PC-3 (cell line): ENCODE measurements at regions of chr10 and their contacts with region 1.

Region 1: DNA sequence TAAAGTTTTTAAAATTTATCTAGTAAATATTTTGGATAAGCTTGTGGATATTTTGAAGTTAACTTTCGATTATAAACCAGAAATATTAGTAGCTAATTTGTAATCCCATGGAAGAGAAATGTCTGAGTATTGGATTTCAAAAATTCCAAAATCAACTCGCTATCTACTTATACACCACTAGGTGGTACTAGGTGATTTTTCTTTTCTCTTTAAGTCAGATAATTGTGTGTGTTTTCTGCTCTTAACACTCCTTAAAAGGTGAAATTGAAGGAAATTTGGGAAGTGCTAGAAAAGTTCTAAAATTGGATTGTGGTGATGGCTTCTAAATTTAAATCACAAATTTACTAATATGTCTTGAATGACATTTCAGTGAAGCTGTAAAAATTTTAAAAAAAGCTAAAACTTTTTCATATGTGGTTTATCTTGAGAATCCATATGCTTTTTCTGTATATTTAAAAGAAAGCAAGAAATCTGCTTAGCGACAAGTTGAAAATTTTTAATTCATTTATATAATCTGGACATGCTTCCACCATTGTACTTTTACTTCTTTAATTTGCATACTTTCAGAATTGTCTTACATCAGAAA is 90.2 kb downstream of the IPMK start:
- DNase-seq: peak; percentile 64
- ATAC-seq: peak; percentile 31; the same call in 1 of the 2 replicates
- H3K4me3 ChIP-seq: no peak overlapping the region
- H3K27ac ChIP-seq: no peak overlapping the region
- H3K4me1 ChIP-seq: peaks cover 6% of the 10 kb centered on the region
- H3K27me3 ChIP-seq: peaks cover 2% of the 10 kb centered on the region; the same call in 1 of the 2 replicates
- CTCF ChIP-seq: peak; percentile 94

Region 2: DNA sequence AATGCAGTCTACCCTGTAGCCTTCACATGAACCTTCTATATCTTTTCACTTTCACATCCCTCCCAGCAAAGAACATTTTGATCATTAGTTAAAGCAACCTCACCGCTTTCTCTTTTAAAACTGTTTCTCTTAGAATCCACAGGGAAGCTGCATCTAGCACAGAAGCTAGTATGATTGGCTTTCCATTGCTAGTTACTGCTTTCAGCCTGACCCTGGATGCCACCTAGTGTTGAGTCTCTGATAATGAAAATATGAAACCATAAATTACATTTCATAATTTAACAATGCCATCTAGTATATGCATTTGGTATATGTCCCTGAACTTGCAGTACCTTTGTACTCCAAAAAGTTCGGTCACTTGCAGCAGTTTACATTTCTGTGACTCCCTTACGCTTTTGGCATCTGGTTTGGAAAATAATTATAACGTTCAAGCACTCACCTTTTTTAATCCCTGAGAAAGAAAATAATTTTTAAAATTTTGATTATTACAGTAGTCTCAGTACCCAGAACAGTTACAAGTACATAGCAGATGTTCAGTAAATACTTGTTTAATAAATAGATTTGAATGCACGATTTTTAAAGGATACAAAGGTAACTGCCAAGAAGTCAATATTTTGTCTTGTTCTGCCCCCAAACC is 114.2 kb after region 1 on chr10:
- CTCF ChIA-PET with region 1: interaction called, 20 read pairs
- POLR2A ChIA-PET with region 1: no interaction called
- intact Hi-C with region 1: loop called (anchors 1 kb)
- DNase-seq: peak; percentile 78
- ATAC-seq: peak; percentile 95
- H3K4me3 ChIP-seq: no peak overlapping the region
- H3K27ac ChIP-seq: no peak overlapping the region
- H3K4me1 ChIP-seq: no peaks in the 10 kb centered on the region
- H3K27me3 ChIP-seq: no peaks in the 10 kb centered on the region
- CTCF ChIP-seq: peak; percentile 98

Region 3: DNA sequence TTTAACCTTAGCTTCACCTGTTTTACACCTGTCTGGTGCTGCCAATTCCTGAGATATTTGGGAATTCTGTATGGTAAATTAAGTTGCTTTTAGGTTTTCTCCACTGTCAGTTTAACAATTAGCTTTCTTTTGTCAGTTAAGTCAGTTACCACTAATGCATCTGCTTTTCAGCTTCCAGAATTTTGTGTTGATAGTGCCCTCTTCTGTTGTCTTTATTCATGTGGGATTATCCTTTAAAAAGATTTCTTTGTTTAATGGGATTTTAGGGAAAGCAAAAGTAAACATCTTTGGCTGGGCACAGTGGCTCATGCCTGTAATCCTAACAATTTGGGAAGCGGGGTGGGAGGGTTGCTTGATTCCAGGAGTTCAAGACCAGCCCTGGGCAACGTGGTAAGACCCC is 215.9 kb after region 1 on chr10:
- CTCF ChIA-PET with region 1: no interaction called
- POLR2A ChIA-PET with region 1: no interaction called
- intact Hi-C with region 1: loop called (anchors 5 kb)
- DNase-seq: peak; percentile 30
- ATAC-seq: peak; percentile 71
- H3K4me3 ChIP-seq: no peak overlapping the region
- H3K27ac ChIP-seq: no peak overlapping the region
- H3K4me1 ChIP-seq: no peaks in the 10 kb centered on the region
- H3K27me3 ChIP-seq: no peaks in the 10 kb centered on the region
- CTCF ChIP-seq: peak; percentile 45; the same call in 1 of the 2 replicates